Gastrocnemius medialis (tissue), 4 donors: ENCODE measurements at regions of chr9 and their contacts with region 1.

Region 1: GRCh38 chr9:38160613-38161215 is 91.7 kb upstream of the SHB start:
- DNase-seq: peak; percentile 19 to 35
- ATAC-seq: peak; percentile 66 to 80
- H3K4me3 ChIP-seq: no peak overlapping the region
- H3K27ac ChIP-seq: no peak overlapping the region
- H3K4me1 ChIP-seq: peaks cover 0 to 3% of the 10 kb centered on the region in 2 donors
- H3K27me3 ChIP-seq: no peaks in the 10 kb centered on the region
- CTCF ChIP-seq: peak; percentile 48 to 86 (median 71)
- POLR2A ChIP-seq: no peak

Region 2: GRCh38 chr9:38017149-38017884 is 143.4 kb before region 1 on chr9:
- in situ Hi-C with region 1: no loop called
- intact Hi-C with region 1: loop called (anchors 1 kb)
- DNase-seq: peak; percentile 53 to 74
- ATAC-seq: peak; percentile 91 to 92
- H3K4me3 ChIP-seq: peak overlapping the region; percentile 16 to 30 (median 21)
- H3K27ac ChIP-seq: peak overlapping the region in 2 of 4 donors; percentile 20 to 26
- H3K4me1 ChIP-seq: peaks cover 29 to 39% of the 10 kb centered on the region in 2 donors
- H3K27me3 ChIP-seq: no peaks in the 10 kb centered on the region
- CTCF ChIP-seq: peak; percentile 39 to 67 (median 58)
- POLR2A ChIP-seq: no peak

Region 3: DNA sequence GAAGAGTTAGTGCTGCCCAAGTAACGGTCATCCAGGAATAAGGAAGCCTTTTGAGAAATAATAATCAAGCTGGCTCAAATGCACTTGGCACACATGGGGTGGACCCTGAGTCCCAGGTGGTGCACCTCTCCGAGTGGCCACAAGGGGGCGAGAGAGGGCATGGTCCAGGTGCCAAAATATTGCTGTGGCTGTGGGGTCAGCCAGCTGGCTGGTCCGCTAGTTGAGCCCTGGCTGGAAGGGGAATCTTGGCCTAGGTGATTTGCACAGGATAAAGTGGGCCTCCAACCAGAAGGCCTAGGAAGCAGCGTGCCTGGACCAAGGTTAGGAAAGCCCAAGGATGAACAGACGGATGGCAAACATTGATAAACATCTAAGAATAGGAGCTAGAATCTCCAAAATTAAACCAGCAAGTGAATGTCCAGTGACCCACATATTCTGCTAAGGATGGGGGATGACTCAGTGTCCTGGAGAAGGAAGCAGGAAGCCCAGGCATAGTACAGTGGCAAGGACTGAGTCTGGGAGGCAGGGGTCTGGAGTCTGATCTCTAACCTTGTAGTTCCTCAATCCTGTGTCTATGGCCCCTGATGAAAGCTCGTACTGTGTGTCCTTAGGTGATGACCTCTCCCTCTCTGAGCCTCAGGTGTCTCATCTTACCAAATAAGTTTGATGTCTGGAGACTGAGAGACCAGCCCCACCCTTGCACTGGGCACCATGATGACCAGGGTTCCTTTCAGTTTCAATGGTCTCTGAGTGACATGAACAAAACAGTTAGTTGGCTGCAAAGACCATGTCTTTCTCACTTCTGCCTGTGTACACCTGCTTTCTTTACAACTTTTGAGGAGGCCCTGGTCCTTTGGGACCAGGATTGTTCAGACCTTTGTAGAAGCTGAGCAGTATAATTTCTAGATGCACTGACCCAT is 72.4 kb before region 1 on chr9:
- in situ Hi-C with region 1: no loop called
- intact Hi-C with region 1: loop called (anchors 2 kb)
- DNase-seq: peak; percentile 23 to 64
- ATAC-seq: peak; percentile 85 to 89
- H3K4me3 ChIP-seq: no peak overlapping the region
- H3K27ac ChIP-seq: peak overlapping the region in 2 of 4 donors; percentile 36 to 42
- H3K4me1 ChIP-seq: peaks cover 8 to 9% of the 10 kb centered on the region in 2 donors
- H3K27me3 ChIP-seq: no peaks in the 10 kb centered on the region
- CTCF ChIP-seq: peak; percentile 87 to 95 (median 90)
- POLR2A ChIP-seq: no peak

Region 4: GRCh38 chr9:38107811-38108304 is 52.9 kb before region 1 on chr9:
- in situ Hi-C with region 1: no loop called
- intact Hi-C with region 1: no loop called
- DNase-seq: no peak
- ATAC-seq: no peak
- H3K4me3 ChIP-seq: no peak overlapping the region
- H3K27ac ChIP-seq: no peak overlapping the region
- H3K4me1 ChIP-seq: no peaks in the 10 kb centered on the region
- H3K27me3 ChIP-seq: no peaks in the 10 kb centered on the region
- CTCF ChIP-seq: no peak
- POLR2A ChIP-seq: no peak

Region 5: GRCh38 chr9:38214432-38214831 is 53.7 kb after region 1 on chr9:
- in situ Hi-C with region 1: loop called in 1 of 4 experiments (anchors 10 kb)
- intact Hi-C with region 1: no loop called
- DNase-seq: no peak
- ATAC-seq: no peak
- H3K4me3 ChIP-seq: no peak overlapping the region
- H3K27ac ChIP-seq: no peak overlapping the region
- H3K4me1 ChIP-seq: no peaks in the 10 kb centered on the region
- H3K27me3 ChIP-seq: no peaks in the 10 kb centered on the region
- CTCF ChIP-seq: no peak
- POLR2A ChIP-seq: no peak